ENCODE measurements at regions of chr5 and their contacts with region 1.

Region 1: DNA sequence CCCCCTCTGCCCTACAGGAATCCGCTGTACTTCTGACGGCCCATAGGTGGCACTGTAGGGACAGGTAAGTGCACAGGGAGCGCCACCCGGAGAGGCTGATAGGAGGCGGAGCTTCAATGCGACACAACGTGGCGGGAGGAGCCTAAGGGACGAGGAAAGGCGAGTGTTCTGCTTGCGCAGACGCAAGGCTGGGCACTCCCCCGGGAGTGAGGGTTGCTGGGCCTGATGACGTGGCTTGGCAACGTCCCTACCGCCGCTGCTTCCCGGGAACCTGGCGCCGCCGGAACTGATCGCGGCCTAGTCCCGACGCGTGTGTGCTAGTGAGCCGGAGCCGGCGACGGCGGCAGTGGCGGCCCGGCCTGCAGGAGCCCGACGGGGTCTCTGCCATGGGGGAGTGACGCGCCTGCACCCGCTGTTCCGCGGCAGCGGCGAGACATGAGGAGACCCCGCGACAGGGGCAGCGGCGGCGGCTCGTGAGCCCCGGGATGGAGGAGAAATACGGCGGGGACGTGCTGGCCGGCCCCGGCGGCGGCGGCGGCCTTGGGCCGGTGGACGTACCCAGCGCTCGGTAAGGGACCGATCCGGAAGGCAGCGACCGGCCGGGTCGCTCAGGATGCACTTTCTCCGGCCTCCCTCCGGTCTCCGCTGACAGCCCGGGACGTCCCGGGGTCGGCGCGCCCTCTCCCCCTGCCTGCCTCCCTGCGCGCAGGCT is at the start of gene SLC30A5:
- DNase-seq: peak; percentile 99
- H3K4me3 ChIP-seq: peak within 1 kb of the TSS; percentile 82 to 88 (median 87)
- H3K27ac ChIP-seq: peak within 1 kb of the TSS; percentile 77
- H3K4me1 ChIP-seq: peaks cover 8% of the 10 kb centered on the region
- H3K27me3 ChIP-seq: no peaks in the 10 kb centered on the region
- CTCF ChIP-seq: peak; percentile 86 to 95
- total RNA-seq, gene SLC30A5: 47.8 to 48.5 TPM

Region 2: GRCh38 chr5:67998709-67999261 is 1095.1 kb before region 1 on chr5:
- CTCF ChIA-PET with region 1: no interaction called
- dilution Hi-C with region 1: no loop called
- in situ Hi-C with region 1: no loop called
- intact Hi-C with region 1: no loop called
- DNase-seq: no peak
- H3K4me3 ChIP-seq: no peak overlapping the region
- H3K27ac ChIP-seq: no peak overlapping the region
- H3K4me1 ChIP-seq: no peaks in the 10 kb centered on the region
- H3K27me3 ChIP-seq: no peaks in the 10 kb centered on the region
- CTCF ChIP-seq: no peak

Region 3: GRCh38 chr5:69166686-69167492 is 73.0 kb after region 1 on chr5 and contains the start of gene CCNB1:
- CTCF ChIA-PET with region 1: no interaction called
- dilution Hi-C with region 1: no loop called
- in situ Hi-C with region 1: no loop called
- intact Hi-C with region 1: loop called (anchors 2 kb)
- DNase-seq: peak; percentile 98
- H3K4me3 ChIP-seq: peak within 1 kb of the TSS; percentile 74 to 87 (median 76)
- H3K27ac ChIP-seq: peak within 1 kb of the TSS; percentile 81
- H3K4me1 ChIP-seq: peaks cover 19% of the 10 kb centered on the region
- H3K27me3 ChIP-seq: no peaks in the 10 kb centered on the region
- CTCF ChIP-seq: no peak
- total RNA-seq, gene CCNB1: 22.5 to 151 TPM

Region 4: DNA sequence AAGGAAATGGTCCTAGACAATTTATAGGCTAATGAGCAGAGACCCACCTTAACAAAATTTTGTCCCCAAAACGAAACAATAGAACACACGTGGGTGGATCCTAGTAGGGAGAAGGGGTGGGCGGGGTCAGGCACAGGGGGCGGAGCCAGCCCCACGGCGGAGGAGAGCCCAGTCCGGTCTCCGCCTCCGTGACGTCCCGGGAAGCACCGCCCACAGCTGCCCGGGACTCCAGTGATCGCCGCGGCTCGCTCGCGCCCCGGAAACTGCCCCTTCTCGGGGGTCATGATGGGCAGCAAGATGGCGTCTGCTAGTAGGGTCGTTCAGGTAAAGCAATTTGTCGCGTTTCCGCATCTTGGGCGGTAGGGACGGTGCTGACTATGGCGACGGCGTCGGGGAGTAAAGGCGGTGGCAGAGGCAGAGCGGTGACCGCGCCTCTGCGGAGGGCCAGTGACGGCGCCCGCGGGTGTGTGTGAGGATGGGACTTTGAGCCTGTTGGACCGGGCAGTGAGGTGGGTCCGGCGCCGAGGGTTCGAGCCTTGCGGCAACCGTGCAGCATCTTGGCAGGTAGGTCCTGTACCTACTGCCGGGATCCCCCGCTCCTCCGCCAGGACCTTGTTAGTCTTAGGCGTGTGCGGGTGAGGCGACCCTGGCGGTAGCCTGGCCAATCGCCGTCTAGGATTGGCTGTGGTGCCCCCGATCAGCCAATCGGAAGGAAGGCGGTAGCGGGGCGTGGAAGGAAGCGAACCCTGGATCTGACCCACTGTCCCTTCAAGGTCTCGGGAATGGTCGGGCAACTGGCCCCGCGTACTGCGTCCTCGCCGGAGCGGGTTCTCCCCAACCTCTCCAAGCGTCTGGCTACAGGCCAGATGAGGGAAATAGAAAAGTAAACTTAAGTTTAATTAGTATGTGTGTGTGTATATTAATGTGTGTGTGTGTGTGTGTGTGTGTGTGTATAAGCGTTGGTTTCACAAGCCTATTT is 123.9 kb after region 1 on chr5:
- CTCF ChIA-PET with region 1: no interaction called
- dilution Hi-C with region 1: no loop called
- in situ Hi-C with region 1: no loop called
- intact Hi-C with region 1: no loop called
- DNase-seq: peak; percentile 89
- H3K4me3 ChIP-seq: peak overlapping the region; percentile 95 to 100 (median 100)
- H3K27ac ChIP-seq: peak overlapping the region; percentile 78
- H3K4me1 ChIP-seq: peaks cover 10% of the 10 kb centered on the region
- H3K27me3 ChIP-seq: no peaks in the 10 kb centered on the region
- CTCF ChIP-seq: peak; percentile 5 to 28

Region 5: GRCh38 chr5:69234457-69235268 is 140.7 kb after region 1 on chr5 and contains the start of gene CDK7:
- CTCF ChIA-PET with region 1: no interaction called
- dilution Hi-C with region 1: no loop called
- in situ Hi-C with region 1: no loop called
- intact Hi-C with region 1: loop called (anchors 5 kb)
- DNase-seq: peak; percentile 93
- H3K4me3 ChIP-seq: peak within 1 kb of the TSS; percentile 75 to 97 (median 84)
- H3K27ac ChIP-seq: peak within 1 kb of the TSS; percentile 89
- H3K4me1 ChIP-seq: peaks cover 32% of the 10 kb centered on the region
- H3K27me3 ChIP-seq: no peaks in the 10 kb centered on the region
- CTCF ChIP-seq: no peak
- total RNA-seq, gene CDK7: 41.2 to 52.4 TPM

Region 6: DNA sequence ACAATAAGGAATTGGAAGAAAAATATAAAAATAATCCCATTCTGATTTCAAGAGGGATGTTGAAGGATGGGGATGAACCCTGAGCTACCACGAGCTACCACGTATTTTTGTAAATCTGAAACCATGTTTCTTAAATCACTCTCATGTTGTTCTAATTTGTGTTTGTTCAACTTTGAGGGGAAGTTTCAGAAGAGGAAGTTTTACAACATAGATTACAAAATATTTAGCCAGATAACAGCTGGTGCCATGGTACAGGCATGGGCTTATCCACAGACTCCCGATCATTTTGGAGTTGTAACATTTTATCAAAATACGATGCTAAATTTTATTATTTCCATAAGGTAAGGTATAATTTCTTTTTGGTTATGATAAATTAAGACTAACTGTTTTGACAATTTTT is 223.5 kb after region 1 on chr5:
- CTCF ChIA-PET with region 1: no interaction called
- dilution Hi-C with region 1: no loop called
- in situ Hi-C with region 1: no loop called
- intact Hi-C with region 1: no loop called
- DNase-seq: no peak
- H3K4me3 ChIP-seq: no peak overlapping the region
- H3K27ac ChIP-seq: no peak overlapping the region
- H3K4me1 ChIP-seq: no peaks in the 10 kb centered on the region
- H3K27me3 ChIP-seq: no peaks in the 10 kb centered on the region
- CTCF ChIP-seq: no peak

Region 7: GRCh38 chr5:69369369-69370121 is 275.6 kb after region 1 on chr5 and contains the starts of genes AK6, RAD17 and TAF9:
- CTCF ChIA-PET with region 1: no interaction called
- dilution Hi-C with region 1: no loop called
- in situ Hi-C with region 1: loop called in 1 of 2 experiments (anchors 25 kb)
- intact Hi-C with region 1: loop called (anchors 1 kb)
- DNase-seq: peak; percentile 92
- H3K4me3 ChIP-seq: peak within 1 kb of the TSS; percentile 89 to 100 (median 99)
- H3K27ac ChIP-seq: peak within 1 kb of the TSS; percentile 91
- H3K4me1 ChIP-seq: peaks cover 4% of the 10 kb centered on the region
- H3K27me3 ChIP-seq: no peaks in the 10 kb centered on the region
- CTCF ChIP-seq: no peak
- total RNA-seq, gene AK6: 14.0 to 38.5 TPM
- total RNA-seq, gene RAD17: 21.5 to 23.3 TPM
- total RNA-seq, gene TAF9: 84.0 to 105 TPM

Measured in mammary epithelial cell (primary cell).